HepG2 (cell line): ENCODE measurements at regions of chr9 and their contacts with region 1.

Region 1: GRCh38 chr9:75200892-75201470 is 112.7 kb downstream of the OSTF1 start:
- DNase-seq: peak; percentile 47
- ATAC-seq: no peak; the same call in 2 of the 3 replicates
- H3K4me3 ChIP-seq: no peak overlapping the region
- H3K27ac ChIP-seq: no peak overlapping the region
- H3K4me1 ChIP-seq: no peaks in the 10 kb centered on the region
- H3K27me3 ChIP-seq: peaks cover 0 to under 1% of the 10 kb centered on the region in 2 experiments; a peak in 2 of 5 replicates
- CTCF ChIP-seq: peak; percentile 63
- EP300 ChIP-seq: no peak
- POLR2A ChIP-seq: no peak
- RAD21 ChIP-seq: peak; percentile 49

Region 2: GRCh38 chr9:75229605-75230332 is 28.8 kb after region 1 on chr9:
- CTCF ChIA-PET with region 1: no interaction called
- POLR2A ChIA-PET with region 1: no interaction called
- in situ Hi-C with region 1: no loop called
- intact Hi-C with region 1: no loop called
- DNase-seq: peak; percentile 58
- ATAC-seq: peak; percentile 97
- H3K4me3 ChIP-seq: peak overlapping the region in 1 of 3 experiments; percentile 9; a peak in 1 of 6 replicates
- H3K27ac ChIP-seq: peak overlapping the region; percentile 43
- H3K4me1 ChIP-seq: peaks cover 24% of the 10 kb centered on the region
- H3K27me3 ChIP-seq: no peaks in the 10 kb centered on the region
- CTCF ChIP-seq: no peak
- EP300 ChIP-seq: peak in 1 of 2 experiments; percentile 34; a peak in 1 of 4 replicates
- POLR2A ChIP-seq: no peak
- RAD21 ChIP-seq: no peak

Region 3: GRCh38 chr9:75333624-75334023 is 132.6 kb after region 1 on chr9:
- CTCF ChIA-PET with region 1: no interaction called
- POLR2A ChIA-PET with region 1: no interaction called
- in situ Hi-C with region 1: no loop called
- intact Hi-C with region 1: no loop called
- DNase-seq: no peak
- ATAC-seq: no peak
- H3K4me3 ChIP-seq: no peak overlapping the region
- H3K27ac ChIP-seq: no peak overlapping the region
- H3K4me1 ChIP-seq: no peaks in the 10 kb centered on the region
- H3K27me3 ChIP-seq: no peaks in the 10 kb centered on the region
- CTCF ChIP-seq: 0 out of 2 replicates have a peak, but pooled peaks have one; percentile 4
- EP300 ChIP-seq: no peak
- POLR2A ChIP-seq: no peak
- RAD21 ChIP-seq: no peak

Region 4: DNA sequence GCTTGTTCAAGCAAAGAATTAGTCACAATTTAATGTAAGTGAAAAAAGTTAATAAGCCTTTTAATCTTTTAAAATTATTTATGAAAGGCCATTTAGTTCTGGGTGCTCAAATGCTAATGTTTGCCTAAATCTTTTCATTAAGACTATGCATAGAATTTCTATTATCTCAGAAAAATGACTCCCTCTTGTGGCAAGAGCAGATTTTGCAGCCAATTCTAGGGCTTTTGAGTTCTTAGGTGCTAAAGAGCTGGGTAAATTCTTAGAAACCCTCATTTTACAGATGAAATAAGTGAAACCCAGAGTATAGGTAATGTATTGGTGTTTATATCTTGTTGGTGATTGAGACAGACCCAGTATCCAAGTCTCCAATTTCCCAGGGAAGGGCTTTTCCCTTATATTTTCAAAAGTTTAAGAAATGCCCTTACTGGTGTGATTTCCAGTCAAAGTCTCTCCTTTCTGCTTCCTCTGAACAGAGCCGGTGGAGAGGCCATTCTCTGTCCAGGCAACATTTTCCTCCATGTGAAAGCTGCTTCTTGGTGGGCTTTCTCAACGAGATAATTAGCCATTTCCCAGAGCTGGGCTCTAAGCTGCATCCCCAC is 665.4 kb after region 1 on chr9:
- CTCF ChIA-PET with region 1: no interaction called
- POLR2A ChIA-PET with region 1: no interaction called
- in situ Hi-C with region 1: no loop called
- intact Hi-C with region 1: loop called (anchors 2 kb)
- DNase-seq: peak; percentile 27
- ATAC-seq: peak; percentile 39; the same call in 2 of the 3 replicates
- H3K4me3 ChIP-seq: no peak overlapping the region
- H3K27ac ChIP-seq: no peak overlapping the region
- H3K4me1 ChIP-seq: no peaks in the 10 kb centered on the region
- H3K27me3 ChIP-seq: no peaks in the 10 kb centered on the region
- CTCF ChIP-seq: peak; percentile 49; the same call in 1 of the 2 replicates
- EP300 ChIP-seq: no peak
- POLR2A ChIP-seq: no peak
- RAD21 ChIP-seq: no peak